GM10248 (cell line): ENCODE measurements at regions of chr2 and their contacts with region 1.

Region 1: DNA sequence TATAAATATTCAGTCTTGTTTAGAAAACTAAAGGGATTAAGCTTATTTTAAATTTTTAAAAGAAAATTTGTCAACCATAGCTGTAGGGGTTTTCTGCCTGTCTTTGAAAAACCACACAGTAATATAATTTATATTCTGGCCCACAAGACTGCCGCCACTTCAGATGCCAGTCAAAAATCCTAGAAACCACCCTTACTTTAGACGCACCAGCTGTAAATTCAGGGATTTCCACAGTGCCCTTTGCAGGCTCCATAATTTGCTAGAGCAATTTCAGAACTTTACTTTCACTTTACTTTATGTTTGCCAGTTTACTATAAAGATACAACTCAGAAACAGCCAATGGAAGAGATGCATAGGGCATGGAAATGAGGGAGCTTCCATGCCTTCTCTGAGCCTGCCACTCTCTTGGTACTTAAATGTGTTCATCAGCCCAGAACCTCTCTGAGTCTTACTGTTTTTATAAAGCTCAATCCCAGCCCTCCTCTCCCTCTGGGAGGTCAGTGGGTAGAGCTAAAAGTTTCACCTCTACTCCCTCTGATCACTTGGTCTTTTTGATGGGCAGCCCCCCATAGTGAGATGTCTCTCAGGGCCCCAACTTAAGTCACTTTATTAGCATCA is 63.3 kb downstream of the KYNU start:
- DNase-seq: no peak
- CTCF ChIP-seq: no peak

Region 2: DNA sequence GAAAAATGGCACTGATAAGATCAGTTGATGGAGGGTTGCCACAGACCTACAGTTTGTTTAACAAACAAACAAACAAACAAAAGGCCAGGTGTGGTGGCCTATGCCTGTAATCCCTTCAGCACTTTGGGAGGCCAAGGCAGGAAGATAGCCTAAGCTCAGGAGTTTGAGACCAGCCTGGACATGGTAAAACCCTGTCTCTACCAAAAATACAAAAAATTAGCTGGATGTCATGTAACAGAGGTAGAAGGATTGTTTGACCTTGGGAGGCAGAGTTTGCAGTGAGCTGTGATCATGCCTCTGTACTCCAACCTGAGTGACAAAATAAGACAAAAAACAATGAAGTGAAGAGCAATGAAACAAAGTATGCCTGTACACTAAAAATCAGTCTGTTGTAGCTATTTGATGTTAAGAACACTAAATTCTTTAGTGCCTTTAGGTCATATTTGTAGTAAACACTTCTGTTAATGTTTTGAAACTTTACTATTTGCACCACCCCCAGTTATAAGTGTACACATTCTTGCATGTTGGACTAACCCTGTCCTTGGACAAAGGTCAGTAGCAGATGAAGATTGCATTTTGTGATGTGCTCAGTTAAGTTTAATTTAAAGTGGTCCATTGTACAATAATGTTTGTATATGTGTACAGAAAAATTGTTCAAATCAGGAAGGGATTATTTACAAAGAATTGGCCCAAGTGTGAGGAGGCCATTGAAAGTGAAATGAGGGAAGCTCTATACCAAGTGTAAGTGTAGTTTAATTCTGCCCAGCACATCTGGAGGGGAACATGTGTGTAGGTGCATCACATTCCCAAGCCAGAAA is 10.7 kb after region 1 on chr2:
- CTCF ChIA-PET with region 1: interaction called, 16 read pairs
- POLR2A ChIA-PET with region 1: no interaction called
- DNase-seq: no peak
- CTCF ChIP-seq: no peak